ENCODE measurements at regions of chr20 and their contacts with region 1.

Region 1: DNA sequence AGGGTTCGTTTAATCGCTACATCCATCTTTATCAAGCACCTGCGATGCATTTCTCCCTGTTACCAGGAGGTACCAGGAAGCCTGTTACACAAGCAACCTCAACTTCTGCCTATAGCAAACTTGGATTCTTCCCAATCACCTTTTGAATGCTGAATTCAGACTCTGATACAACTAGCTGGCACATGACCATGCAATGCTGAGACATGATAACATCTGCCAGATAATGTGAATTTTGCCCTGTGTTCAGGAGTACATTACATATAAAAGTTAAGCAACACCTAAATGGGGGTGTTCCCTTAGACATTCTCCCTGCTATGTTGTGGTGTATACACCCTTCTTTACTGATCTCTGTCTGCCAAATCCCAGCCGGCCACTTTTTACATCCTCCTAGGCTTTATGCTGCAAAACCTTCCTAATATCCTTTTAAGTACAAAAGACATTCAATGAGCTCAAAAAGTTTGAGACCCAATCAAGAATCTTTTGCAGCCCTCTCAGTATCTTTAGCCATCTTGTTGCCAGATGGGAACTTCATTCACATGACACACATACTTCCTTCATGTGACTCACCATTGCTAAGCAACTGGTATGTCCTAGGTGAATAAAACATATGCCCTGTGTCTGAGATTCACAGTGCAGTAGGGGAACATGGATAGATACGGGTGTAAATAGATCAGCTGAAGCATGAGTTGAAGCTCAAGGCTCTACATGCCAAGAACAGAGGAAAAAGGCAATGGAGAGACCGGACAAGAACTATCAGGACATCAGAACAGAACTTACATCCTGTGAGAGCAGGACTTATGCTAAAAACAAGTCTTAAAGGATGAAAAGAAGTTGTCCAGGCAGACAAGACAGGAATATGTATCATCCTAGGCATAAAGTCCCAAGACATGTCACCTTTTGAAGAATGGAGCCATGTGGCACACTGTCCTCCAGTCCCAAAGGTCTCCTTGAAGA is 84.3 kb downstream of the ZHX3 start:
- DNase-seq: no peak
- ATAC-seq: peak; percentile 32
- H3K4me3 ChIP-seq: no peak overlapping the region
- H3K27ac ChIP-seq: no peak overlapping the region
- H3K4me1 ChIP-seq: peaks cover 30% of the 10 kb centered on the region
- H3K27me3 ChIP-seq: no peaks in the 10 kb centered on the region; a peak in 1 of 5 replicates
- CTCF ChIP-seq: no peak
- EP300 ChIP-seq: no peak
- POLR2A ChIP-seq: no peak
- RAD21 ChIP-seq: no peak

Region 2: GRCh38 chr20:40970201-40970600 is 263.0 kb before region 1 on chr20:
- CTCF ChIA-PET with region 1: interaction called, 9 read pairs
- POLR2A ChIA-PET with region 1: no interaction called
- in situ Hi-C with region 1: no loop called
- intact Hi-C with region 1: loop called (anchors 1 kb)
- DNase-seq: no peak
- ATAC-seq: no peak
- H3K4me3 ChIP-seq: no peak overlapping the region
- H3K27ac ChIP-seq: no peak overlapping the region
- H3K4me1 ChIP-seq: peaks cover 25% of the 10 kb centered on the region
- H3K27me3 ChIP-seq: peaks cover 4 to 8% of the 10 kb centered on the region in 2 experiments; a peak in 2 of 5 replicates
- CTCF ChIP-seq: 0 out of 2 replicates have a peak, but pooled peaks have one; percentile 21
- EP300 ChIP-seq: no peak
- POLR2A ChIP-seq: no peak
- RAD21 ChIP-seq: no peak

Region 3: GRCh38 chr20:41136680-41137613 is 96.3 kb before region 1 on chr20 and contains the start of gene PLCG1:
- CTCF ChIA-PET with region 1: interaction called, 8 read pairs
- POLR2A ChIA-PET with region 1: interaction called, 3 read pairs
- in situ Hi-C with region 1: no loop called
- intact Hi-C with region 1: loop called (anchors 1 kb)
- DNase-seq: peak; percentile 84
- ATAC-seq: peak; percentile 73
- H3K4me3 ChIP-seq: peak within 1 kb of the TSS; percentile 81 to 91 (median 85)
- H3K27ac ChIP-seq: peak within 1 kb of the TSS; percentile 88
- H3K4me1 ChIP-seq: peaks cover 80% of the 10 kb centered on the region
- H3K27me3 ChIP-seq: no peaks in the 10 kb centered on the region
- CTCF ChIP-seq: no peak; the same call in 1 of the 2 replicates
- EP300 ChIP-seq: peak in 1 of 2 experiments; percentile 8; a peak in 1 of 4 replicates
- POLR2A ChIP-seq: peak; percentile 80 to 91
- RAD21 ChIP-seq: peak; percentile 64; the same call in 1 of the 2 replicates
- total RNA-seq, gene PLCG1: 53.1 and 85.3 TPM in 2 replicates

Region 4: GRCh38 chr20:41161886-41162285 is 71.4 kb before region 1 on chr20:
- CTCF ChIA-PET with region 1: no interaction called
- POLR2A ChIA-PET with region 1: no interaction called
- in situ Hi-C with region 1: no loop called
- intact Hi-C with region 1: no loop called
- DNase-seq: no peak
- ATAC-seq: peak; percentile 5; the same call in 1 of the 3 replicates
- H3K4me3 ChIP-seq: no peak overlapping the region
- H3K27ac ChIP-seq: no peak overlapping the region
- H3K4me1 ChIP-seq: peaks cover 7% of the 10 kb centered on the region; the same call in 1 of the 2 replicates
- H3K27me3 ChIP-seq: no peaks in the 10 kb centered on the region
- CTCF ChIP-seq: peak; percentile 45; the same call in 1 of the 2 replicates
- EP300 ChIP-seq: no peak
- POLR2A ChIP-seq: no peak
- RAD21 ChIP-seq: no peak

Region 5: DNA sequence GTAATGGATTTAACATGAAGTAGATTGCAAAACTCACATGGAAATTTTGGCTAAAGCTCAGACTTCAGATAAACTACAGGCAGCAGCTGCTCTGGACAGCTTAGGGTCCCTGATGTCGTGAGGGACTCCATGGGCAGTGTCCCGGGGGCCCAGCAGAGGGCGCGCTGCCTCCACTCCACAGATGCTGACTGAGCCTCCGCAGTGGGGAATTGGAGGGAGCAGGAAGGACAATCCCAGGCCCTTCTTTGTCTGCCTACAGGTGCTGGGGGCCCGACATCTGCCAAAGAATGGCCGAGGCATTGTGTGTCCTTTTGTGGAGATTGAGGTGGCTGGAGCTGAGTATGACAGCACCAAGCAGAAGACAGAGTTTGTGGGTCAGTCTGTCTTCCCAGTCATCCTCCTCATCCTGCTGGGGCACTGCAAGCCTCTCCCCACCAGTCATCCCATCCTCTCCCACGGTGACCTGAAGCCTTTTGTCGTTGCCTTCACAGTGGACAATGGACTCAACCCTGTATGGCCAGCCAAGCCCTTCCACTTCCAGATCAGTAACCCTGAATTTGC is 60.0 kb before region 1 on chr20:
- CTCF ChIA-PET with region 1: interaction called, 13 read pairs
- POLR2A ChIA-PET with region 1: no interaction called
- in situ Hi-C with region 1: no loop called
- intact Hi-C with region 1: loop called (anchors 1 kb)
- DNase-seq: peak; percentile 62
- ATAC-seq: peak; percentile 89
- H3K4me3 ChIP-seq: no peak overlapping the region
- H3K27ac ChIP-seq: no peak overlapping the region
- H3K4me1 ChIP-seq: no peaks in the 10 kb centered on the region
- H3K27me3 ChIP-seq: no peaks in the 10 kb centered on the region
- CTCF ChIP-seq: peak; percentile 98
- EP300 ChIP-seq: no peak
- POLR2A ChIP-seq: no peak
- RAD21 ChIP-seq: peak; percentile 98

Region 6: DNA sequence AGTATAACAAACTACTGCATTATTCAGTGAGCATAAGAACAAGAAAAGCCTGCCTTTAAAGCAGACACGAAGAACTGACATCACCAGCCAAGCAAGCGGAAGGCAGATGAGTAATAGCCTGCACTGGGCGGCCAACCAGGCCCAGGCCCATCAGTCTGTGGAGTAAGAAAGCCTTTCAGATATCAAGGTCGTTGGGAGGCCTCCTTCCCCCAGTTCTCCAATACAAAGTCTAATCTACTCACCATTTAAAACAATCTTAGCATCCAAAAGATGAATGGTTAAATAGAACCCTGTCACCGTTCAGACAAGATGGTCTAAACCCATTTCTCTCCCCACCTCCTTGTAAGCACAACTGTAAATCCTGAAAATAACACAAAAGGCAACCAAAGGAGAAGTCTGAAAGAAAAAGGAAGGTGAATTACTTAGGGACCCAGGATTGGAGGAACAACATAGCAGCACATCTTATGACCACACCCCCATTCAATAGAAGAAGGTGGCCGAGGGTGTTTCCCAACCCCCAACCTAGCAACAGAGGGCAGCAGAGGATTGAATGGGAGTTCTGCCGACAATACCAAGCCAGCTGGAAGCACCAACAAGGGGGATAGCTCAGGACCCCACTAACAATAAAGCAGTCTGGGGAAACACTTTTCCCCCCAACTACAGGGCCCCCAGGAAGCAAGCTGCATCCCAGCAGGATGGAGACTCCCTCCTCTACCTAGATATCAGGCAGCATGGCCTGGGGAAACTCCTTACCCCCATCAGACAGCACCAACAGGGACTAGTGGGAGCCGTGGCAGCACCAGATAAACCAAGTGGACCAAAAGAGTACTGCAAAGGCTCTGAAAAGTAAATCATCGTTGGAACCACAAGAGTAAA is 16.4 kb after region 1 on chr20:
- CTCF ChIA-PET with region 1: no interaction called
- POLR2A ChIA-PET with region 1: no interaction called
- in situ Hi-C with region 1: no loop called
- intact Hi-C with region 1: no loop called
- DNase-seq: peak; percentile 55
- ATAC-seq: peak; percentile 96
- H3K4me3 ChIP-seq: no peak overlapping the region
- H3K27ac ChIP-seq: no peak overlapping the region
- H3K4me1 ChIP-seq: no peaks in the 10 kb centered on the region
- H3K27me3 ChIP-seq: no peaks in the 10 kb centered on the region
- CTCF ChIP-seq: peak; percentile 83
- EP300 ChIP-seq: no peak
- POLR2A ChIP-seq: no peak
- RAD21 ChIP-seq: peak; percentile 73

Region 7: DNA sequence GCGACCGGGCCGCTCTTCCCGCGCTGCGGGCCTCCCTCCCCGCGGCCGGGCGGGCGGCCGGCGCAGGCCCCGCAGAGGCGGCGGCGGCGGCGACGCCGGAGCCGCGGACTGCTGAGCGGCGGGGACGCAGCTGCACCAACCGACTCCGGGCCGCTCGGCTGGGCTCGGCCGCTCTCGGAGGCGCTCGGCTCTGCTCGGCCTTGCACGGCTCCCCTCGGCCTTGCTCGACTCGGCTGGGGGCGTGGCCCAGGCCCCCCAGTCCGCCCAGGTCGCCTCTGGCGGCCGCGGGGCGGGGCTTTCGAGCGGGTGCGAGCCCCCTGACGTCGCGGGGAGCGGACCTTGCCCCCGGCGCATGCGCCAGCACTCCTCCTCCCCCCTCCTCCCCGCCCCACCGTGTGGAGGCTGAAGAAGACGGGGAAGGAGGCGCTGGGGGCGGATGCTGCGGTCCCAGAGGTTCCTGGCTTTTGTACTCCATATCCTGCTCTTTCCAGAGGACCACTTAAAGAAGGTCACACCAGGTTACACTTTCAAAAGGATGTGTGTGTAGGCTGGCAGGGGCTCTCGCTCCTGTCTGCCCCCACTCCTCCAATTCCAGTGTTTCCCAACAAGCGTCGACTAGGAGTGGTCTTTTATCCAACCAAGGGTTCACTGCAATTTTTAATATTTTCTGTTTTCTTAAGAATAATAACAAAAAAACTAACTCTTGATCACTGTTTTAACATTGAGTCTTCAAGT is 84.5 kb after region 1 on chr20 and contains the start of gene ZHX3:
- CTCF ChIA-PET with region 1: no interaction called
- POLR2A ChIA-PET with region 1: no interaction called
- in situ Hi-C with region 1: no loop called
- intact Hi-C with region 1: loop called (anchors 5 kb)
- DNase-seq: peak; percentile 96
- ATAC-seq: peak; percentile 96
- H3K4me3 ChIP-seq: peak within 1 kb of the TSS; percentile 75 to 95 (median 91)
- H3K27ac ChIP-seq: peak within 1 kb of the TSS; percentile 68
- H3K4me1 ChIP-seq: peaks cover 47% of the 10 kb centered on the region
- H3K27me3 ChIP-seq: peaks cover 0 to 3% of the 10 kb centered on the region in 2 experiments; a peak in 1 of 5 replicates
- CTCF ChIP-seq: 0 out of 2 replicates have a peak, but pooled peaks have one; percentile 14
- EP300 ChIP-seq: 0 out of 4 replicates have a peak, but pooled peaks of 1 of the 2 experiments have one; percentile 3
- POLR2A ChIP-seq: peak in 1 of 2 experiments; percentile 89; a peak in 3 of 4 replicates
- RAD21 ChIP-seq: no peak; the same call in 1 of the 2 replicates
- total RNA-seq, gene ZHX3: 11.7 and 13.0 TPM in 2 replicates

Measured in HepG2 (cell line).